ENCODE measurements at regions of chr6 and their contacts with region 1.

Region 1: DNA sequence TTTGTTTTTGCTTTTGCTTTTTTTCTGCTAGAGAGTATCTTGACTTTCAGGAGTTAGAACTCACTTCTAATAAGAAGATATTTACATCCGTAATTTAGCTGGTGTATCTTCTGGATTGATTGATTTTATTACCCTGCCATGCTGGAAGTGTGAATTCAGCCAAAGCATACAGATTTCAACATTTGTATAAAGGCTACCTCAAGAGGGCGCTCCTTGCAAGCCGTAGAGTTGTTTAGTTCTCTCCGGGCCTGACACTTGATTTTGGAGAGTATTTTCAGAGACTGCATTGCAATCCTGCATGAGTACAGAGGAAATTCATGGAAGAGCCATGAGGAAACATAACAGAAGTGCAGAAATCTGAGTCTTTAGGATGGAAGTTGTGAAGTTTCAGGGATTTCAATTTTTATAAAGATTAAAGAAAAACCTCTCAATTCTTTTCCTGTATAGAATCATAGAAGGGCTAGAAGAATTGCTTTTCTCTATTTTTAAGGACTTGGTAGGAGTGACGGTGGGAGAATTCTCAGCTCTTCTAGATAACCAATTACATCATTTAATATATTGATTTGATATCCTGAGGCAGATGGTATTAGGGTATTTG is 66.7 kb upstream of the TIAM2 start:
- DNase-seq: peak; percentile 82
- ATAC-seq: peak; percentile 84
- H3K4me3 Mint-ChIP-seq: no peak overlapping the region
- H3K27ac Mint-ChIP-seq: no peak overlapping the region
- H3K4me1 Mint-ChIP-seq: peaks cover 14% of the 10 kb centered on the region
- H3K27me3 Mint-ChIP-seq: no peaks in the 10 kb centered on the region

Region 2: DNA sequence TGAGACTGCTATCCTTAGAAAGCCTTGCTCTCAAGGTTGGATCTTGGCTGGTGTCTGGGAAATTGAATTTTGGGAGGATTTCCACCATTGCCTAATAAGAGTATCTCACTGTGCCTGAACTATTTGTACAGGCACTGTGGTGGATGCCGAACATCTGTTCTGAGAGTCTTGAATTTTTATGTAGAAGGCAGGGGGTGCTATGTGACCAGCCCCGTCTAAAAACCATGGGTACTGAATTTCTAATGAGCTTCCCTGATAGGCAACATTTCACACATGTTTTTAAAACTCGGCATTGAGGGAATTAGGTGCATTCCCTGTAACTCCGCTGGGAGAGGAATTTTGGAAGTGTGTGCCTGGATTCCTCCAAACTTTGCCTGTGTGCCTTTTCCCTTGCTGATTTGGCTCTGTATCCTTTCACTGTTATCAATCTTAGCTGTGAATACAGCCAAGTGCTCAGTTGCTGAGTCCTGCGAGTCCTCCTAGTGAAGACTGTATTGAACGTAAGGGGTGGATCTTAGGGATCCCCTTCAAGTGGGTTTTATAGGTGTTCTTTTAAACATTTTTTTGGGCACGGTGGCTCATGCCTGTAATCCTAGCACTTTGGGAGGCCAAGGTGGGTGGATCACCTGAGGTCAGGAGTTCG is 222.8 kb before region 1 on chr6:
- CTCF ChIA-PET with region 1: no interaction called
- POLR2A ChIA-PET with region 1: no interaction called
- intact Hi-C with region 1: no loop called
- DNase-seq: no peak
- ATAC-seq: no peak
- H3K4me3 Mint-ChIP-seq: no peak overlapping the region
- H3K27ac Mint-ChIP-seq: no peak overlapping the region
- H3K4me1 Mint-ChIP-seq: no peaks in the 10 kb centered on the region
- H3K27me3 Mint-ChIP-seq: peaks cover 9% of the 10 kb centered on the region

Region 3: GRCh38 chr6:154783229-154783628 is 145.2 kb before region 1 on chr6:
- CTCF ChIA-PET with region 1: no interaction called
- POLR2A ChIA-PET with region 1: no interaction called
- intact Hi-C with region 1: no loop called
- DNase-seq: no peak
- ATAC-seq: no peak
- H3K4me3 Mint-ChIP-seq: no peak overlapping the region
- H3K27ac Mint-ChIP-seq: no peak overlapping the region
- H3K4me1 Mint-ChIP-seq: peaks cover 37% of the 10 kb centered on the region
- H3K27me3 Mint-ChIP-seq: no peaks in the 10 kb centered on the region

Region 4: GRCh38 chr6:154868143-154868594 is 60.3 kb before region 1 on chr6:
- CTCF ChIA-PET with region 1: interaction called, 17 read pairs
- POLR2A ChIA-PET with region 1: no interaction called
- intact Hi-C with region 1: loop called (anchors 2 to 5 kb)
- DNase-seq: peak; percentile 16
- ATAC-seq: peak; percentile 85
- H3K4me3 Mint-ChIP-seq: no peak overlapping the region
- H3K27ac Mint-ChIP-seq: no peak overlapping the region
- H3K4me1 Mint-ChIP-seq: peaks cover 24% of the 10 kb centered on the region
- H3K27me3 Mint-ChIP-seq: no peaks in the 10 kb centered on the region

Region 5: DNA sequence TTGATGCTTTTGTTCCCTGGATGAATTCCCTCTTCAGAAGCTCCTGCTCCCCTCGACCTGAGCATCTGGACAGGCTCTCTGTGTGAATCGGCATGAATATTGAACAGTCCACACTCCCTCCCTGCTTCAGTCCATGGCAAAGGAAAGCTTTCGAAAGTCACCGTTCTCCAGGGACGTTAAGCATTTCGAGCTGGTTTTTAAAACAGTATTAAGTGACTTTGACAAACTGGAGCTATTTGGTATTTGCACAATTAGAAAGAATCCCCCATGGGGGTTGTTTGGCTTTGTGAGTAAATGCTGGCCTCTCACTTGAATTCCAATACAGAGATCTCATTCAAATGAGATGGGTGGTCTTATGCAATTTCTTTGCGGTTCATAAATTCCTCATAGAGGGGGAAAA is 18.6 kb before region 1 on chr6:
- CTCF ChIA-PET with region 1: interaction called, 12 read pairs
- POLR2A ChIA-PET with region 1: no interaction called
- intact Hi-C with region 1: no loop called
- DNase-seq: no peak
- ATAC-seq: no peak
- H3K4me3 Mint-ChIP-seq: no peak overlapping the region
- H3K27ac Mint-ChIP-seq: no peak overlapping the region
- H3K4me1 Mint-ChIP-seq: peaks cover 3% of the 10 kb centered on the region
- H3K27me3 Mint-ChIP-seq: no peaks in the 10 kb centered on the region

Region 6: DNA sequence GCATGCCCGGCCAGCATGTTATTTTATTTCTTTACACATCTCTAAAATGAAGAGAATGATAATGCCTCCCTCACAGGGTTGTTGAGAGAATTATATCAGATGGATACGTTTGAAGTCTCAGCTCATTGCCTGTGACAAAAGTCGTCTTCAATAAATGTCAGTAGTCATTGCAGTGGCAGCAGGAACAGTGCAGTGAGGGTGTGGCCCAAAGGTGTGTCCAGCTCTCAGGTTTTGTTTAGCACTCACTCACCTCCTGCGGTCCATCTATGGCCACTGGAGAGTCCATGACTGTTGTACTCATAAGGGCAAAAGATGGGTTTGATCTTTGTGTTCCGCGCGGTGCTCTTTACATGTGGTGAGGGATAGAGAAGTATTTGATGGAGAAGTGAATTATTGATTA is 10.5 kb before region 1 on chr6:
- CTCF ChIA-PET with region 1: interaction called, 12 read pairs
- POLR2A ChIA-PET with region 1: no interaction called
- intact Hi-C with region 1: no loop called
- DNase-seq: no peak
- ATAC-seq: no peak
- H3K4me3 Mint-ChIP-seq: no peak overlapping the region
- H3K27ac Mint-ChIP-seq: no peak overlapping the region
- H3K4me1 Mint-ChIP-seq: peaks cover 11% of the 10 kb centered on the region
- H3K27me3 Mint-ChIP-seq: no peaks in the 10 kb centered on the region

Region 7: GRCh38 chr6:155248008-155249001 is 319.9 kb after region 1 on chr6:
- CTCF ChIA-PET with region 1: interaction called, 12 read pairs
- POLR2A ChIA-PET with region 1: no interaction called
- intact Hi-C with region 1: loop called (anchors 1 to 2 kb)
- DNase-seq: peak; percentile 55
- ATAC-seq: peak; percentile 66
- H3K4me3 Mint-ChIP-seq: no peak overlapping the region
- H3K27ac Mint-ChIP-seq: peak overlapping the region; percentile 4
- H3K4me1 Mint-ChIP-seq: no peaks in the 10 kb centered on the region
- H3K27me3 Mint-ChIP-seq: no peaks in the 10 kb centered on the region

Region 8: DNA sequence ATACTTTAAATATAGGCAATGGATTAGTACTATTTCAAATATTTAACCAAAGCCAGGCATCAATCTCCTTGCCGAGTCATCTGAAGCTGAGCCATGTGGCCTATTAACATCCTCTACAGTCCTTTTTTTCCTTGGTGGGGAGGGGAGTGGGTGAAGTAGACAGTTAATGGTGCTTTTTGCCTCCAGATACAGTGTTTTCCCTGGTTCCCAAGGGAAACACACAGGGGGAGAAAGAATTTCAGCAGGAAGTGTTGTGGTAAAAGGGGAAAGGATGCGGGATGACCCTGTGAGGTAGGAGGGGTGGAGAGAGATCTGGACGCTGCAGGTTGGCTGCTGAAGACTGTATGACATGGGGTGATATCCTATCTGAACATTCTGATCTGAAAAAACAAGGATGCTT is 345.0 kb after region 1 on chr6:
- CTCF ChIA-PET with region 1: interaction called, 16 read pairs
- POLR2A ChIA-PET with region 1: no interaction called
- intact Hi-C with region 1: no loop called
- DNase-seq: no peak
- ATAC-seq: no peak
- H3K4me3 Mint-ChIP-seq: no peak overlapping the region
- H3K27ac Mint-ChIP-seq: no peak overlapping the region
- H3K4me1 Mint-ChIP-seq: peaks cover 6% of the 10 kb centered on the region
- H3K27me3 Mint-ChIP-seq: no peaks in the 10 kb centered on the region

Region 9: DNA sequence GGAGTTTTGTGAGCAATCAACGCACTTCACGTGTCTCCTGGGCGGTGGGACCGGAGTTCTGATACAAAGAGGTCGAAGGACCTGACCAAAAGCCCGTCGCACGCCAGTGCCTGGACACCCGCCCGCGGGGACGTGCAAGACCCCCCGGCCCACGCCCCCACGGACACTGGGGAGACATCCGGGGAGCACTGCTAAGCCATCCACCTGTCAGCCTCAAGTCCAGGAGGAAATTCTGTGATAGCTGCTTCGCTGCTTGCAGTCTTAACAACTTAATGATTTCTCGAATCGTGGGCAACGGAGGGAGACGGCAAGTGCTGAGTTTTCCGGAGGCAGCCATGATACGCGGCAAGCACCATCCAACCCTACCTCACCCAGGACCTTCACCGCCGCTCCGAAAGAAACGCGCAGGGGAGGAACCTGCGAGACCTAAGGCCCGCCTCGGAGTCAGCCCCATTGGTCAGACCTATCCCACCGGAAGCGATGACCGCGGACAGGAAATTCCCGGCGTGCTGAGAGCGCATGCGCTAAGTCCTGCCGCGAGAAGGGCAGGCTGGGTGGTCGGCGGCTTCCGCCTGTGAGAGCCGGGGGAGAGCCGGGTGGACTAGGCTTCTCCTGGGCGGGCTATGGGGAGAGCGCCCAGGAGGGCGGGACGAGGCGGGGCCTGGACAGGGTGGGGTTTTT is 385.8 kb after region 1 on chr6 and contains the start of gene TFB1M:
- CTCF ChIA-PET with region 1: interaction called, 13 read pairs
- POLR2A ChIA-PET with region 1: no interaction called
- intact Hi-C with region 1: loop called (anchors 2 to 5 kb)
- DNase-seq: peak; percentile 99
- ATAC-seq: peak; percentile 95
- H3K4me3 Mint-ChIP-seq: peak within 1 kb of the TSS; percentile 90
- H3K27ac Mint-ChIP-seq: peak within 1 kb of the TSS; percentile 98
- H3K4me1 Mint-ChIP-seq: peaks cover 39% of the 10 kb centered on the region
- H3K27me3 Mint-ChIP-seq: no peaks in the 10 kb centered on the region
- total RNA-seq, gene TFB1M: 45.5 to 56.4 TPM